WTC11 (cell line): ENCODE measurements at regions of chr19 and their contacts with region 1.

Region 1: DNA sequence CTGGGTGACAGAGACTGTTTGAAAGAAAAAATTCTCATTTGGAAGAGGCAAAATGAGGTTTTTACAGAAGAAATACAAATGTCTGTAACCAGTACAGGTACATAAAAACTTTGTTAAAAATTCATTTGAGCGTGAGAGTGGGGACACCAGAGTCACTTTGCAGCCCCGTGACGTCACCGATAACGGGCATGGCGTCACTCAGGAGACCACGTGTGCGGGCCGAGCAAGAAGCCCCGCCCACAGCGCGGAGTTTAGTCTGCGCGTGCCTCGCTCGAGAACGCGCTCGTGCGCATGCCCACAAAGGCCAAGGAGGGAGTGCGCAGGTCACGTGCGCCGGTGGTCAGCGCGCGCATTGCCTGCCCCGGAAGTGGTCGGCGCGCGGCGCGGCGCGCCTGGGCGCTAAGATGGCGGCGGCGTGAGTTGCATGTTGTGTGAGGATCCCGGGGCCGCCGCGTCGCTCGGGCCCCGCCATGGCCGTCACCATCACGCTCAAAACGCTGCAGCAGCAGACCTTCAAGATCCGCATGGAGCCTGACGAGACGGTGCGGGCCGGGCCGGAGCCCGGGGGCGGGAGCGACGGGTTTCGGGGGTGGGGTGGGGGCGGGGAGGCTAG is at the start of gene RAD23A:
- DNase-seq: peak; percentile 98
- ATAC-seq: peak; percentile 67
- H3K4me3 Mint-ChIP-seq: peak within 1 kb of the TSS; percentile 90
- H3K27ac Mint-ChIP-seq: peak within 1 kb of the TSS; percentile 98
- H3K4me1 Mint-ChIP-seq: peaks cover 17% of the 10 kb centered on the region
- H3K27me3 Mint-ChIP-seq: no peaks in the 10 kb centered on the region; the same call in 1 of the 2 replicates
- CTCF ChIP-seq: no peak
- total RNA-seq, gene RAD23A: 84.3 to 96.6 TPM (median 96.2 TPM) in 3 replicates

Region 2: GRCh38 chr19:12956446-12957388 is 11.1 kb after region 1 on chr19 and contains the start of gene GADD45GIP1:
- CTCF ChIA-PET with region 1: no interaction called
- POLR2A ChIA-PET with region 1: interaction called, 10 read pairs
- DNase-seq: peak; percentile 78
- ATAC-seq: peak; percentile 93
- H3K4me3 Mint-ChIP-seq: peak within 1 kb of the TSS; percentile 90
- H3K27ac Mint-ChIP-seq: peak within 1 kb of the TSS; percentile 89
- H3K4me1 Mint-ChIP-seq: peaks cover 26% of the 10 kb centered on the region
- H3K27me3 Mint-ChIP-seq: peaks cover 2% of the 10 kb centered on the region; the same call in 1 of the 2 replicates
- CTCF ChIP-seq: no peak
- total RNA-seq, gene GADD45GIP1: 54.4 to 57.9 TPM (median 56.1 TPM) in 3 replicates